Right ventricle myocardium inferior (tissue), 1 donor: ENCODE measurements at regions of chr18 and their contacts with region 1.

Region 1: DNA sequence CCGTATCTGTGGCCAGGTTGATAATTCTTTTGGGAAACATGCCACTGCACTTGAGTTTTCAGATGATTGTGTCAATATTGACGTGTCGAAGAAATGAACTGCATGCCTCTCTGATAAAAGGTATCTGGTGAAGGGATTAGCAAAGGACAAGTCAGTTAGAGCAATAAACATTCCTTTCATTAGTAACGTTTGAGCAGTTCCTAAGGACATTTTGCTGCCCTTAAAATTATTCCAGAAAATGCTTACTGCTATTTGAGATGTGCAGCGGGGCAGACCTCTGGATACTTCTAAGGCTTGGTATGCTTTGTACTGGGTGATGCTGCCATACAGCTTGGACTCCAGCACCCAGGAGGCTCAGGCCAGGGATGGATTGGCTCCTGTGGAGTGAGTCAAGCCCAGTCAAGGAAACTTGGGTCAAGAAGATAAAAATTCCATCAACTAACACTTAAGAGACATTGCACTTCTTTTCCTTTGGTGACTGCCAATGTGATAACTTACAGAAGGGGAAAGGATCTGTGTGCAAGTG is 166.7 kb downstream of the FHOD3 start:
- DNase-seq: no peak
- ATAC-seq: peak; percentile 56

Region 2: DNA sequence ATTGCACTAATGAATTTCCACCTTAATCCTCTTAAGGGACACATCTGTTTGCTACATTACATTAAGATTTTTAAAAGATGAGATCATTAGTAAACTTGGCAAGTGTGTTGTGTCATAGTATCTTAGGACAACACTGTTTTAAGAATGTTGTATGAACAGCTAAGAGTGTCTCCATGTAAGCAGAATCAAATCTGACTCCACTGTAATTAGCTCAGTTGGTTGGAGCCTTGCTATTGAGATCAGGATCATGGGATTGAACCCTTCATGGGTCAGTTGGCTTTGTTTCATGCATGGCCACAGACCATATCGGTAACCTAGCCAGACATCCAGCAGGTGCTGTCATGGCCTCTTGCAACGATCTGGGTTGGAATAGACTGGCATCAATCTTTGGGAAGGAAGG is 161.5 kb before region 1 on chr18:
- intact Hi-C with region 1: loop called (anchors 2 kb)
- DNase-seq: no peak
- ATAC-seq: no peak

Region 3: DNA sequence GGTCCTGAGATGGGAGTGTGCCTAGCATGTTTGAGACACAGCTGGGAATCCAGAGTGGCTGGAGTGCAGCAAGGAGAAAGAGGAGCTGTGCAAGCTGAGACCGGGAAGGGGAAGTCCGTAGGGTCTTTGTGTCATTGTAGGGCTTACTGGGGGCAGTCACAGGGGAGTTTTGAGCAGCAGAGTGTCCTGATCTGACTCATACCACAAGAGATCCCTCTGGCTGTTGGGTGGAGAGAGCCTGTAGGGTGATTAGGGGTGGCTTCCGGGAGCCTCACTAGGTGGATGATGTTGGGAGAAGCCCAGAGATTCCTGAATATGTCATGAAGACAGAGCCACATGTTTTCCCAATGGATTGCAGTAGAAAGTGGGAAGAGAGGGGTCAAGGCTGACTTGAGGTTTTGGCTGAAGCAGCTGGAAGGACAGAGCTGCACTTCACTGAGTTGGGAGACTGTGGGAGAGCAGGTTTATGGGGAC is 135.8 kb before region 1 on chr18:
- intact Hi-C with region 1: loop called (anchors 5 kb)
- DNase-seq: no peak
- ATAC-seq: peak; percentile 2

Region 4: DNA sequence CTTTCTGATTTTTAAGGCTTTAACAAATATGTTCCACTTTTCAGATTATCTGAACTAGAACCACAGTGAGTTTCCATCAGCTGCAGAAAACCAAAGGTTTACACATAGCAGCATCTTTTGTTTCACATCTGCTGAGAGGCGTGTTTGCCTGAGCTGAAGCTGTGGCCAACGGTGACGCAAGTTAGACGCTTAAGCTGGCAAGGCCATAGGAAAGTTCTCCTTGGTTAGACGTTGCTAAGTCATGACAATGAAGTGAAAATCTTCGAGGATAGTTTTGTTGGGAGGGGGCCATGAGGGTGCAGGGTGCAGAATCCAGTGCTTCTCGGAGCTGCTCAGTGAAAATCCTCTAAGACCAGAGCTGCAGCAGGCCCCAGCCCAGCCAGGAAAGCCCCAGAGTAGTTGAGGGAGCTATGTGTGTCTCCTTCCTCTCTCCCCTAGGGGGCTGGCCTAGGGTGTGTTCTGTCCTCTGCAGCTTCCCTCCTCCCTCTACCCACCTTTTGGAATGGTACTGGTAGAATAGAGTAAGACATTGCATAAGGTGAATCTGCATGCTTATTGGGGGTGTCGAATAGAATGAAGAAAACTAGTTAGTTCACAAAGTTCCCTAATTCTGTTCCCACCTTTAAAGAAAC is 61.3 kb before region 1 on chr18:
- intact Hi-C with region 1: loop called (anchors 5 kb)
- DNase-seq: peak; percentile 81
- ATAC-seq: peak; percentile 52

Region 5: GRCh38 chr18:36572135-36572856 is 108.1 kb after region 1 on chr18:
- intact Hi-C with region 1: loop called (anchors 5 kb)
- DNase-seq: no peak
- ATAC-seq: peak; percentile 58

Region 6: GRCh38 chr18:36628435-36629137 is 164.4 kb after region 1 on chr18:
- intact Hi-C with region 1: loop called (anchors 5 kb)
- DNase-seq: no peak
- ATAC-seq: peak; percentile 4